HepG2 (cell line): ENCODE measurements at regions of chr19 and their contacts with region 1.

Region 1: DNA sequence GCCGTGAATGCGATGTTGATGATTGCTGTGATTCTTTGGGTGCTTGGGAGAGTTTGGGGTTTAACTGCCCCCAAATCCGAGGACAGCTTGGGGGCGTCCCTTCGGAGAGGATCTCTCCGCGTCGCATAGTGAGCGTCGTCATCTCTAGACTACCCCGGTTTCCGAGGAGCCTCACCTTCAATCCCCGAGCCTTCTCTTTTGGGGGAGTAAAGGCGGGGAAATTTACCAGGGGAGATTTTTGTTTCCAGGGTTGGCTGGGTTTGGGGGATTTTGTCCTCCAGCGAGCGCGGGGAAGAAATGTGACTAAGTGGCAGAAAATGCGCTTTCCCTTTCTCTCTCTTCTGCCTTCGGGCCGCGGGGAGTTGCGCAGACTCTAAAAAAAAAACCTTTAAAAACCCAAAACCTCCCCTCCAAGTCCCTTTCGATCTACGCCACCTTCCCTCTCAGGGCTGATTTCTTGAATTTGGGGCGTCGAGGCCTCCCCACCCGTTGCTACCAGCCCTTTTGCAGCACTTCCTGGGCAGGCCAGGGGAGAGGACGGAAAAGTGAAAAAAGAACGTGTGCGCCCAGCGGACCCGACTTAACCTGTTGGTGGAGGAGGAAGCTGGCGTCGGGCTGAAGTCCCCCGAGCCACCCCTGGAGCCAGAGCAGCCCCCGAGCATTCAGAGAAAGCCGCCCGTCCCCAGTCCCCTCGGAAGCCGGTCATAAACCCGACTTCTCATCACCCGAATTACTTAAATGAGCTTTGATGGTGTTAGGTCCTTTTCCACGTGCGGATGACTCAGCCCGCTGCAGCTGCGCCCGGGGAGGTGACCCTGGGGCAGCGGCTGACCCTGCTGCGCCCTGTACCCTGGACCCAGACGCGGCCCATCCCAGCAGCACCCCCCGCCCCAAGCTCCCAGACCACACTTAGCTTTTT is 17.7 kb downstream of the NFIX start:
- DNase-seq: peak; percentile 52
- ATAC-seq: peak; percentile 80
- H3K4me3 ChIP-seq: peak overlapping the region in 1 of 3 experiments; percentile 54; a peak in 1 of 6 replicates
- H3K27ac ChIP-seq: peak overlapping the region; percentile 73
- H3K4me1 ChIP-seq: peaks cover 31% of the 10 kb centered on the region
- H3K27me3 ChIP-seq: no peaks in the 10 kb centered on the region
- CTCF ChIP-seq: no peak
- EP300 ChIP-seq: peak in 1 of 2 experiments; percentile 45; a peak in 2 of 4 replicates
- POLR2A ChIP-seq: no peak
- RAD21 ChIP-seq: peak; percentile 44; the same call in 1 of the 2 replicates

Region 2: GRCh38 chr19:13022859-13023636 is 10.1 kb after region 1 on chr19:
- CTCF ChIA-PET with region 1: no interaction called
- POLR2A ChIA-PET with region 1: interaction called, 13 read pairs
- in situ Hi-C with region 1: no loop called
- intact Hi-C with region 1: no loop called
- DNase-seq: peak; percentile 79
- ATAC-seq: peak; percentile 82
- H3K4me3 ChIP-seq: peak overlapping the region; percentile 52 to 71 (median 62)
- H3K27ac ChIP-seq: peak overlapping the region; percentile 73
- H3K4me1 ChIP-seq: peaks cover 83% of the 10 kb centered on the region
- H3K27me3 ChIP-seq: no peaks in the 10 kb centered on the region
- CTCF ChIP-seq: no peak
- EP300 ChIP-seq: no peak
- POLR2A ChIP-seq: no peak
- RAD21 ChIP-seq: no peak

Region 3: GRCh38 chr19:13051267-13052165 is 38.6 kb after region 1 on chr19:
- CTCF ChIA-PET with region 1: no interaction called
- POLR2A ChIA-PET with region 1: interaction called, 21 read pairs
- in situ Hi-C with region 1: no loop called
- intact Hi-C with region 1: no loop called
- DNase-seq: peak; percentile 54
- ATAC-seq: no peak; the same call in 2 of the 3 replicates
- H3K4me3 ChIP-seq: peak overlapping the region in 1 of 3 experiments; percentile 53; a peak in 1 of 6 replicates
- H3K27ac ChIP-seq: no peak overlapping the region
- H3K4me1 ChIP-seq: peaks cover 65% of the 10 kb centered on the region
- H3K27me3 ChIP-seq: no peaks in the 10 kb centered on the region
- CTCF ChIP-seq: no peak; the same call in 1 of the 2 replicates
- EP300 ChIP-seq: peak in 1 of 2 experiments; percentile 85; a peak in 2 of 4 replicates
- POLR2A ChIP-seq: no peak
- RAD21 ChIP-seq: peak; percentile 19; the same call in 1 of the 2 replicates

Region 4: DNA sequence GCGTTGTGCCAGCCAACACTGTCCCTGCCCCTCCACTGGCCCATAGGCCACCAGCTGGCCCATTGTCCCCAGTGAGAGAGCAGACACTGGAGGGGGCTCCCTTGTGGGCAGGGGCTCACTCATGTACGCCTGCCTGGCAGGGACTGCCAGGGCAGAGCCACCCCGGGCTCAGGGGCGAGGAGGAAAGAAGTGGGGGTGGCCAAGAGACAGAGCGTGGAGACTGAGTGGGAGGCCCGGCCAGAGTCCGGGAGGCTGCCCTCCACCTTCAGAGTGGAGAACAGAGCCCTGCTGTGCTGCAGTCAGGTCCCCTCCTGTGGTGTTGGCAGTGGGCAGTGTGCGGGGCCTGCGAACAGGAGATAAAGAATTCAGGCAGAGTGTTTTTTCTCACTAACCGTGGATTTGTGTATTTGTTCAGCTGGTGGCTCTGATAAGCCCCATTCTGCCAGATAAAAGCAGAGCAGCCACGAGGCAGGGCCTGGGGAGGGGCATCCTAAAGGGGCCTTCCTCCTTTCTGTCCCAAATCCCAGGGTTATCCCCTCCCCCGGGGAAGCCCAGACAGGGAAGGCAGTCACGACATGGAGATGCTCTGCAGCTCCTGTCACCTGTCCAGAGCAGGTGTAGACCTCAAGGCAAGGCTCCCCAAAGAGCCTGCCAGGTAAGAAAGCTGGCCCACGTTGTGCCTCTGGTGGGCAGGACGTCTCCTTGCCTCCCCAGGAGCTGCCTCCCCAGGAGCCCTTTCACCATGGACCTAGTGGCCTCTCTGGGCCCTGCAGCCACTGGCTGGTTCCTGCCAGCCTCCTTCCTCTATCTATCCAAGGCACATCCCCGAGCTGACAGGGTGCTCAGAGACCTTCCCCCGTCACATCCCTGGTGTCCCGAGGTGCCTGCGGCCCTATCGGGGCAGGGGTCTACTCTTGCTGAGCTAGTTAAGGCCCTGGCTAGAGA is 56.7 kb after region 1 on chr19:
- CTCF ChIA-PET with region 1: no interaction called
- POLR2A ChIA-PET with region 1: no interaction called
- in situ Hi-C with region 1: no loop called
- intact Hi-C with region 1: no loop called
- DNase-seq: no peak
- ATAC-seq: peak; percentile 23
- H3K4me3 ChIP-seq: no peak overlapping the region
- H3K27ac ChIP-seq: no peak overlapping the region
- H3K4me1 ChIP-seq: peaks cover 26% of the 10 kb centered on the region
- H3K27me3 ChIP-seq: no peaks in the 10 kb centered on the region
- CTCF ChIP-seq: no peak
- EP300 ChIP-seq: no peak
- POLR2A ChIP-seq: no peak
- RAD21 ChIP-seq: no peak